ENCODE measurements at regions of chr9 and their contacts with region 1.

Region 1: GRCh38 chr9:121399883-121400607 is 30.0 kb upstream of the STOM start:
- ATAC-seq: peak; percentile 70 to 83 (median 74)
- H3K4me3 ChIP-seq: no peak overlapping the region
- H3K27ac ChIP-seq: no peak overlapping the region
- H3K4me1 ChIP-seq: no peaks in the 10 kb centered on the region

Region 2: DNA sequence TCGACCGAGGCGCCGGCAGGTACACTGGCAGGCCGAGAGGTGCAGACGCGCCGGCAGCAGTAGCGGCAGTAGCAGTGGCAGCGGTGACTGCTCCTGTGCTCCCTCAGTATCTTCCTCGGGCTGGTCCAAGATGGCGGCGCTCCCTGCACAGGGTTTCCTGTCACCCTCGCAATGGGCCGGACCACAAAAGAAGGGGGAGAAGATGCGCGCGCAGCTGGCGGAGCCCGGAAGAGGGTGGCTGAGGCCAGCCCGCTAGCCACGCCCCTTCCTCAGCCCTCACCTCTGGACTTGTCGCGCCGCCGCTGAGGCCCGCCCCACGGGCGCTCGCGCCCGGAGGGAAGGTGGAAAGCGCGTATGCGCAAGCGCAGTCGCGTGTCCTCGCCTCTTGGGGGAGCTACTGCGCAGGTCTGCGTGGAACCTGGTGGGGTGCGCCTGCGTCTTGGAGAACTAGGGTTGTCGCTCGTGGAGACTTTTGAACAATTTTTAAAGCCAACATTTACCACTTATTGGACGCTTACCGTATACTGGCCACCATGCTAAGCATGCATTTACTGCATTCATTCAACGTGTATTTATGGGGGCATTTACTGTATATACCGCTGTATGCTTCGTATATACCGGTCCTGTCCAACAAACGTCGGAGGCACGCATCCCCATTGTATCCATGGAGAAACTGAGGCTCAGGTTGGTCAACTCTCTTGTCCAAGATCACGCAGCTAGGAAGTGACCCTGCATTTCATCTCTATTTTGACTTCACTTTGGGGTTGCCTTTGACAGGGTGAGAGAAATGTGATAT is 198.1 kb before region 1 on chr9 and contains the start of gene RAB14:
- in situ Hi-C with region 1: loop called in 6 of 9 experiments (anchors 25 kb)
- ATAC-seq: peak; percentile 88 to 96 (median 94)
- H3K4me3 ChIP-seq: peak within 1 kb of the TSS; percentile 61 to 87 (median 76)
- H3K27ac ChIP-seq: peak within 1 kb of the TSS; percentile 92 to 97
- H3K4me1 ChIP-seq: peaks cover 26 to 34% of the 10 kb centered on the region in 2 donors
- total RNA-seq, gene RAB14: 21.3 to 56.0 (median 40.7) TPM

Region 3: GRCh38 chr9:121213136-121213806 is 186.8 kb before region 1 on chr9:
- in situ Hi-C with region 1: loop called (anchors 10 to 25 kb)
- ATAC-seq: peak; percentile 88 to 99 (median 96)
- H3K4me3 ChIP-seq: no peak overlapping the region
- H3K27ac ChIP-seq: no peak overlapping the region
- H3K4me1 ChIP-seq: no peaks in the 10 kb centered on the region

Region 4: GRCh38 chr9:121286973-121287741 is 112.9 kb before region 1 on chr9:
- in situ Hi-C with region 1: no loop called
- ATAC-seq: peak; percentile 65 to 88 (median 82)
- H3K4me3 ChIP-seq: peak overlapping the region in 1 of 5 donors; percentile 7
- H3K27ac ChIP-seq: peak overlapping the region; percentile 93 to 94
- H3K4me1 ChIP-seq: peaks cover 42 to 47% of the 10 kb centered on the region in 2 donors

Region 5: DNA sequence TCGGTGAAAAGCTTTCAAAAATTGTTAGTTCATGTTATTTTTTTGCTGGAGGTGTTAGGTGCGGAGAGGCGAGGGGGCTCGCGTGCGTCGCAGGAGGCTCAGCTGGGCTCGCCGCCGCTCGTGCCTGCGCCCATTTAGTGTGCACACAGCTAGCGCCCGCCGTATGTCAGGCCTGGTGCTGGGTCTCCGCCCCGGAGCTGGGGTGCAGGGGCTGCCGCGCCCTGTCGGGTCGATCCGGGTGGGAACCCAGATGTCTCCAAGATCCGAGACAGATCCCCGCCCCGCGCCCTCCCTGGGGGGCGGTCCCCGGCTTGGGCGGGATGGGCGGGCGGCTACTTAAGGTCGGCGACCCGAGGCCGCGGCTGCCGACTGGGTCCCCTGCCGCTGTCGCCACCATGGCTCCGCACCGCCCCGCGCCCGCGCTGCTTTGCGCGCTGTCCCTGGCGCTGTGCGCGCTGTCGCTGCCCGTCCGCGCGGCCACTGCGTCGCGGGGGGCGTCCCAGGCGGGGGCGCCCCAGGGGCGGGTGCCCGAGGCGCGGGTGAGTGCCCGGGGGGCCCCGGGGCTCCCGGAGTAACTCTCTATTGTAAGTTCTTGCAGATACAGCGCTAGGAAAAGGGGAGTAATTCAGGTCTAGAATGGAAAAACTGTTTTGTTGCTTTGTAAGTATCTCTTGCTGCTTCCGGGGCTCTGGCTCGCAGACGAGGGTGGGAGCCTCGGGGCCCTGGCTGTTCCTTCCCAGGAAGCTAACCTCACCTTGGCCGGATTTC is 100.4 kb before region 1 on chr9:
- in situ Hi-C with region 1: loop called in 1 of 9 experiments (anchors 25 kb)
- ATAC-seq: peak; percentile 65 to 88 (median 81)
- H3K4me3 ChIP-seq: peak overlapping the region; percentile 18 to 27 (median 23)
- H3K27ac ChIP-seq: no peak overlapping the region
- H3K4me1 ChIP-seq: peaks cover 8 to 30% of the 10 kb centered on the region in 2 donors

Region 6: GRCh38 chr9:121317742-121318489 is 82.1 kb before region 1 on chr9:
- in situ Hi-C with region 1: loop called in 3 of 9 experiments (anchors 10 to 25 kb)
- ATAC-seq: no peak
- H3K4me3 ChIP-seq: no peak overlapping the region
- H3K27ac ChIP-seq: no peak overlapping the region
- H3K4me1 ChIP-seq: no peaks in the 10 kb centered on the region